ENCODE measurements at regions of chr2 and their contacts with region 1.

Region 1: DNA sequence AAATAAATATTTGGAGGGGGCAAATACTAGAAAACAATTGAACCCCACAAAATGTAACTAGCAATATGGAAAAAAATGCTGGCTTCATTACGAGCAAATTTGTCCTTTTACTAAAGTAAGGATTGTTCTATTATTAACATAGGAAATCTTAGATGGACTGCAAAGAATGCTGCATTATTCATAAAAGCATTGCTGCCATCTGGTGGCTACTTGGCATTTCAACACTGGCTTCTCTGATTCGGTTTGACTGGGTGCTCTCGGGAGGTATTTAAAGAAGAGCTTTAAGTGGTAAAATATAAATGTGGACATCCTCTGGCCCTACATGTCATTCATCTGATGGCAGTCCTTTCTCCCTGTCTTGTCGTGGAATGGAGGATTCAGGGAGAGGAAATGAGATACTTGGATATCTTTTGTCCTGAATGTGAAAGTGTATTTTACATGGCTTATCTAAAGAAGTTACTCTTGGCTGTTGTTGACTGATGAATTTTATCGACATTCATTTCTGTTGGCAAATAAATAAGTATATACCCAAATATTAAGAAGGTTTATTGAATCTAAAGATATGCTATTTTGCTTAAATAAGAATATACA is 130.2 kb downstream of the ARHGAP15 start:
- DNase-seq: peak; percentile 79
- H3K4me3 Mint-ChIP-seq: peak overlapping the region; percentile 63
- H3K27ac Mint-ChIP-seq: peak overlapping the region; percentile 89
- H3K4me1 Mint-ChIP-seq: peaks cover 85% of the 10 kb centered on the region
- H3K27me3 Mint-ChIP-seq: no peaks in the 10 kb centered on the region

Region 2: DNA sequence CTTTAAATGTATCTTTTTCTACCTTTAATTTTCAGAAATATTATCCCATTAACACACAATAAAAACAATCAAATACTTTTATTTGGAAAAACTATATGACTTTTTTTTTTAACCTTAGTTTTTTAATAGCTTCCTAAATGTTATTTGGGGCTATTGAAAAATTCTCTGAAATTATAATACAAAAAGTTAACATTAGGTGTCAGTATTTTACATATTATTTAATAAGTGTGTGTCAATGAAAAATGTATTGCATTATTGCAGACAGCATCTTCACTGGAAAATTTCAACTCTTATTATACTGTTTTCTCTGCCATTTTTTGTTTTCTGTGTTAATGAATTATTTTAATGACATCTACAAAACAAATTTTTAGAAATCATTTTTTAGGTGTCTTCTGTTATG is 181.4 kb before region 1 on chr2:
- CTCF ChIA-PET with region 1: interaction called, 11 read pairs
- POLR2A ChIA-PET with region 1: no interaction called
- intact Hi-C with region 1: no loop called
- DNase-seq: no peak
- H3K4me3 Mint-ChIP-seq: no peak overlapping the region
- H3K27ac Mint-ChIP-seq: no peak overlapping the region
- H3K4me1 Mint-ChIP-seq: no peaks in the 10 kb centered on the region
- H3K27me3 Mint-ChIP-seq: no peaks in the 10 kb centered on the region

Region 3: GRCh38 chr2:143205106-143205764 is 54.2 kb before region 1 on chr2:
- CTCF ChIA-PET with region 1: interaction called, 87 read pairs
- POLR2A ChIA-PET with region 1: no interaction called
- intact Hi-C with region 1: loop called (anchors 1 kb)
- DNase-seq: no peak
- H3K4me3 Mint-ChIP-seq: no peak overlapping the region
- H3K27ac Mint-ChIP-seq: peak overlapping the region; percentile 63
- H3K4me1 Mint-ChIP-seq: peaks cover 41% of the 10 kb centered on the region
- H3K27me3 Mint-ChIP-seq: no peaks in the 10 kb centered on the region

Region 4: DNA sequence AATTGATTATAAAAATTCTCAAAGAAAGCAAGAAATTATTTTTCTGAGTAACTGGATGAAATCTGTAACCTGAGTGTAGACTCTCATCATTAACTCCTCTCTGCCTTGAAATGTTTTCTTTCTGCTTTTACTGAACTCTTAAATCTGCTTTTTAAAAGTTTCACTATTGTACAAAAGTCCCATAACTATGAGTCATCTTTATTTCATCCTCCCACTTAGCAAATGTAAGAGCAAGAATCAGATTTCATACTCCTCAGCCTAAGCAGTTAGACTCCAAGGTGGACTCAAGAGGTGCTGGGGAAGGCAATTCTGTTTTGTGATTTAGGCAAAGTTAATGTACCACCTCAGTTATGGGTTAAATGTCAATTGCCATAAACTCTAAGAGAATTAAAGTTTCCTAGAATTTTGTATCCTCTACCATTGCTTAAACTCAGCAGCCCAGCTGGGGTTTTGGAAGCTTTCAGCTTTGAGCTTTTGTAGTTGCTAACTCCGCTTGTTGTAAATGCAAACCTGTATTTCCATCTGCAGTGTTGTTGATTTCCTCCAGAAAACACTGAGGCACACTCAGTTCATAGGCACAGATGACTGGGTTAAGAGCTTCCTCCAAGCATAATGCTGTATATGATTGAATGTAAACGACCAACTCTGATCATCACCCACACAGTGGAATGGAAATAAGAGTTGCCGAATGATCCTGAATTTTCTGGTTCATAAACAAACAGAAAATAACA is 138.6 kb after region 1 on chr2:
- CTCF ChIA-PET with region 1: no interaction called
- POLR2A ChIA-PET with region 1: no interaction called
- intact Hi-C with region 1: loop called (anchors 5 kb)
- DNase-seq: no peak
- H3K4me3 Mint-ChIP-seq: peak overlapping the region; percentile 24
- H3K27ac Mint-ChIP-seq: peak overlapping the region; percentile 43
- H3K4me1 Mint-ChIP-seq: peaks cover 66% of the 10 kb centered on the region
- H3K27me3 Mint-ChIP-seq: no peaks in the 10 kb centered on the region

Region 5: DNA sequence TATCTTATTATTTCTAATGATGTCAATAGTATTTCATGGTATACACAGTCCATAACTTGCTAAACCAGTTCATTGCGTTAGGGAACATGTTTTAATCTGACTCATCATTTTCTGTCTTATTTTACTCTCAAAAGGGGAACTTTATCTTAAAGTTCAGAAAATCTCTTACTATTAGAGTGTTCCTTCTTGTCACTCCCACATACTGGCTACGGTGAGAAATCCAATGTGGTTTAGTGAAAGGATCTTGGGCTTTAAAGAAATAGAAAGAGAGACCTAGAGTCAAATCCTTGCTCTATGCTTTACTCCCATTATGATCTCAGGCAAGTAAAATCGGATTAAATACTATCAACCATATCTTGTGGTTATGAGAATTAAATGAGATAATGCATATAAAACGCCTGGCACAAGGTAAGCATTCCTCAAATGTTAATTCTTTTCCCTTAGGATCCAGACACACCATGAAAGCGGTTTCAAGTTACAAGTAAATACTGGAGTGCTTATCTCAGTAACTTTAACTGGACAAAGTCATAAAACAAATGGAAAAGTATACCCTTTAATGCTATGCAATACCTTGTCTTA is 445.7 kb after region 1 on chr2:
- CTCF ChIA-PET with region 1: no interaction called
- POLR2A ChIA-PET with region 1: no interaction called
- intact Hi-C with region 1: loop called (anchors 1 kb)
- DNase-seq: no peak
- H3K4me3 Mint-ChIP-seq: no peak overlapping the region
- H3K27ac Mint-ChIP-seq: peak overlapping the region; percentile 68
- H3K4me1 Mint-ChIP-seq: peaks cover 41% of the 10 kb centered on the region
- H3K27me3 Mint-ChIP-seq: no peaks in the 10 kb centered on the region

Region 6: GRCh38 chr2:144332356-144333142 is 1073.1 kb after region 1 on chr2:
- CTCF ChIA-PET with region 1: no interaction called
- POLR2A ChIA-PET with region 1: no interaction called
- intact Hi-C with region 1: loop called (anchors 5 kb)
- DNase-seq: peak; percentile 92
- H3K4me3 Mint-ChIP-seq: peak overlapping the region; percentile 91
- H3K27ac Mint-ChIP-seq: peak overlapping the region; percentile 96
- H3K4me1 Mint-ChIP-seq: peaks cover 33% of the 10 kb centered on the region
- H3K27me3 Mint-ChIP-seq: no peaks in the 10 kb centered on the region

Measured in activated CD4-positive, alpha-beta memory T cell treated with anti-CD3 and anti-CD28 coated beads for 36 hours (primary cell).